IMR-90 (cell line): ENCODE measurements at regions of chr1 and their contacts with region 1.

Region 1: GRCh38 chr1:203871107-203871875 is 9.9 kb downstream of the SNRPE start:
- DNase-seq: peak; percentile 80
- ATAC-seq: peak; percentile 96
- H3K4me3 ChIP-seq: no peak overlapping the region
- H3K27ac ChIP-seq: no peak overlapping the region
- H3K4me1 ChIP-seq: no peaks in the 10 kb centered on the region
- H3K27me3 ChIP-seq: no peaks in the 10 kb centered on the region
- CTCF ChIP-seq: peak; percentile 100
- POLR2A ChIP-seq: peak; percentile 46; the same call in 1 of the 2 replicates
- RAD21 ChIP-seq: peak; percentile 98

Region 2: GRCh38 chr1:203807196-203807595 is 64.1 kb before region 1 on chr1:
- CTCF ChIA-PET with region 1: no interaction called
- POLR2A ChIA-PET with region 1: no interaction called
- dilution Hi-C with region 1: no loop called
- in situ Hi-C with region 1: no loop called
- intact Hi-C with region 1: no loop called
- DNase-seq: peak; percentile 95
- ATAC-seq: peak; percentile 95
- H3K4me3 ChIP-seq: no peak overlapping the region
- H3K27ac ChIP-seq: peak overlapping the region; percentile 13; the same call in 1 of the 2 replicates
- H3K4me1 ChIP-seq: 0 out of 2 replicates have a peak, but pooled peaks cover 3% of the 10 kb centered on the region
- H3K27me3 ChIP-seq: no peaks in the 10 kb centered on the region
- CTCF ChIP-seq: 0 out of 2 replicates have a peak, but pooled peaks have one; percentile 8
- POLR2A ChIP-seq: no peak
- RAD21 ChIP-seq: peak; percentile 29

Region 3: DNA sequence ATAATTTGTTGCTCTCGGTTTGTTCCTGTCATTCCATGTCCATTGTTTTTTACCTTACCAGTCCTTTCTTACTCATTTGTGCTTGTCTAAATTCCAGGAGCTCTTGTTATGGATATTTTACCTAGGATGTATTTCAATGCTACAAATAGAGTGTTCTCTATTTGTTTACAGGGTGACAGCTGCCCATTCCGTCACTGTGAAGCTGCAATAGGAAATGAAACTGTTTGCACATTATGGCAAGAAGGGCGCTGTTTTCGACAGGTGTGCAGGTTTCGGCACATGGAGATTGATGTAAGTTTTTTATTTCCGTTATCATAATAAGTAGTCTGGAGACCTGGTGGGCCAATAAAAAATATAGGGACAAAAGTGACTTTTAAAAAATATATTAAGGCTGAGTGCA is 52.9 kb before region 1 on chr1:
- CTCF ChIA-PET with region 1: no interaction called
- POLR2A ChIA-PET with region 1: no interaction called
- dilution Hi-C with region 1: no loop called
- in situ Hi-C with region 1: no loop called
- intact Hi-C with region 1: no loop called
- DNase-seq: no peak
- ATAC-seq: no peak
- H3K4me3 ChIP-seq: no peak overlapping the region
- H3K27ac ChIP-seq: no peak overlapping the region
- H3K4me1 ChIP-seq: peaks cover 2% of the 10 kb centered on the region; the same call in 1 of the 2 replicates
- H3K27me3 ChIP-seq: no peaks in the 10 kb centered on the region
- CTCF ChIP-seq: no peak
- POLR2A ChIP-seq: no peak
- RAD21 ChIP-seq: no peak

Region 4: DNA sequence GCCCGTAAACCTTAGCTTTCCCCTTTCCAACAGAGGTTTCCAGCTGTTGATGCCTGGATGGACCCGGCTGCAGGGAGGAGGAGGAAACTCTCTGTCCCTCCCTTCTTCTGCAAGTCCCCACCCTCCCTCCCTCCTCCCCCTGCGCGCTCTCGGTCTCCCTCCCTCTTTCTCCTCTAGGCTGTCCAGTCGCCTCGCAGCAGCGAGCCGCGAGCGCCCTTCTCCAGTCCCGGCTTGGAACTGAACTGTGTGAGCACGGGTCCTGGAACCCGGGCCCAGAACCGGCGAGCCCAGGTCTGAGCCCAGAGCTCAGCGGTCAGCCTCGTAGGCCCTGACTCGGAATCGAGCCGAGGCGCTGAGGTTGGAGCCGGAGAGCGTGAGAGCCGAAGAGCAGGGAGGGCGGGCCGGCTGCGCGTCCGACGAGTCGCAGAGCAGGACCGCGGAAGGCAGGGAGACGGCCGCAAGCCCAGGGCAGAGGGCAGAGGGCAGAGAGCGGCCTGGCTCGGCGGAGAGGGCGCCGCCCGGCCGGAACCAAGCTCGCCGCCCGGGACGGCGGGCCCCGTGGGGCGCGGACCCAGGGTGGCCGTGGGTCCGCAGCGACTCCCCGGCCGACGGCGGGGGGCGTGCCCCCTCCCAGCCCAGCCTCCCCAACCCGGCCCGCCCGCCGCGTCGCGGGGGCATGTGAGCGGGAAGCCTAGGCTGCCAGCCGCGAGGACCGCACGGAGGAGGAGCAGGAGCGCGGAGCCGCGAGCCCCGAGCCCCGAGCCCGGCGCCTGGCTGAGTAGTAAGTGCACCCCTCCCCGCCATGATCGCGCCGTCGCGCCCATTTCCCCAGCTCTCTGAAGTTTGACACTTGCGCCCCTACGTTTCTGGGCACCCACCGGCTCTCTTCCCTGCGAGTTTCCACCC is 201.9 kb after region 1 on chr1 and contains the start of gene SOX13:
- CTCF ChIA-PET with region 1: interaction called, 8 read pairs
- POLR2A ChIA-PET with region 1: no interaction called
- dilution Hi-C with region 1: no loop called
- in situ Hi-C with region 1: no loop called
- intact Hi-C with region 1: loop called (anchors 1 kb)
- DNase-seq: peak; percentile 85
- ATAC-seq: peak; percentile 88
- H3K4me3 ChIP-seq: peak within 1 kb of the TSS; percentile 97
- H3K27ac ChIP-seq: peak within 1 kb of the TSS; percentile 58
- H3K4me1 ChIP-seq: peaks cover 5% of the 10 kb centered on the region
- H3K27me3 ChIP-seq: peaks cover 1% of the 10 kb centered on the region
- CTCF ChIP-seq: peak; percentile 24; the same call in 1 of the 2 replicates
- POLR2A ChIP-seq: peak; percentile 71
- RAD21 ChIP-seq: no peak
- total RNA-seq, gene SOX13: 0.54 and 0.56 TPM in 2 replicates